ENCODE measurements at regions of chr3 and their contacts with region 1.

Region 1: GRCh38 chr3:64030741-64031140 is 7.4 kb upstream of the PSMD6 start:
- DNase-seq: peak; percentile 70 to 74
- ATAC-seq: peak; percentile 82 to 96 (median 89)
- H3K4me3 ChIP-seq: peak overlapping the region in 7 of 10 donors; percentile 9 to 47 (median 29)
- H3K27ac ChIP-seq: no peak overlapping the region
- H3K4me1 ChIP-seq: peaks cover 0 to 11% (median 3%) of the 10 kb centered on the region in 9 donors
- H3K27me3 ChIP-seq: peaks cover 0 to 18% (median 4%) of the 10 kb centered on the region in 7 donors
- CTCF ChIP-seq: peak; percentile 79 to 96 (median 87)

Region 2: DNA sequence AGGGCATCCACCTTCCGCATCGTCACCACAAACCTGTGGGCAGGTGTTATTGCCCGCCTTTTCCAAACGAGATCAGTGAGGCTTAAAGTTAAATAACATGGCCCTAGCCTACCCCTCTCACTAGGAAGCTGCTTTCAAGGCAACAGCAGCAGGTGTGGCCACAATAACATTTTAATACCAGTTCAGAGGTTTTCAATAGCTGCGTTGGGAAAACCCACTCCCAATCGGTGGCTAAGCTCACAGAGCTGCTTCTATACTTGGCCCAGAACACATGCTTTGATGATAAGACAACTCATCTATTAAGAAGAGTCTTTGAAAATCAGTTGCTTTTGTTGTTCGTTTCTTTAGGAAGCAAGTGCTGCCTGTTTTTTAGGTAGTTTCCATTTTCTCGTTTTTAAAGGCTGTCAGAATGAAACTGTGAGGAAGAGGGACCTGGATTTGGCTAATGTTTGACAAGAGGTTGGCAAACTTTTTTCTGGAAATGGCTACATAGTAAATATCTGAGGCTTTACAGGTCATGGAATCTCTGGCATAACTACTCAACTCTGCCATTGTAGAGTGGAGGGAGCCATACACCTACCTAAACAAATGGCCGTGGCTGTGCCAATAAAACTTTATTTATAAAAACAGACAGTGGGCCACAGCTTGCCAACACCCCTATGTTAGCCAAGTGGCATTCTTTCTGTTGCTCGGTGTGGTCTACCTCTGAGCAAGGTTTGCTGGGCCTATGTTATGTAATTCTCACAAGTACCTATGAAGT is 1837.0 kb before region 1 on chr3:
- intact Hi-C with region 1: no loop called
- DNase-seq: no peak
- ATAC-seq: no peak
- H3K4me3 ChIP-seq: no peak overlapping the region
- H3K27ac ChIP-seq: no peak overlapping the region
- H3K4me1 ChIP-seq: peaks cover 0 to 6% (median 5%) of the 10 kb centered on the region in 9 donors
- H3K27me3 ChIP-seq: no peaks in the 10 kb centered on the region
- CTCF ChIP-seq: no peak

Region 3: GRCh38 chr3:64008017-64008971 is 22.4 kb before region 1 on chr3:
- intact Hi-C with region 1: loop called in 1 of 10 experiments (anchors 1 kb)
- DNase-seq: no peak
- ATAC-seq: peak in 1 of 8 donors; percentile 27
- H3K4me3 ChIP-seq: no peak overlapping the region
- H3K27ac ChIP-seq: no peak overlapping the region
- H3K4me1 ChIP-seq: peaks cover 0 to 28% (median 5%) of the 10 kb centered on the region in 9 donors
- H3K27me3 ChIP-seq: no peaks in the 10 kb centered on the region
- CTCF ChIP-seq: no peak

Region 4: DNA sequence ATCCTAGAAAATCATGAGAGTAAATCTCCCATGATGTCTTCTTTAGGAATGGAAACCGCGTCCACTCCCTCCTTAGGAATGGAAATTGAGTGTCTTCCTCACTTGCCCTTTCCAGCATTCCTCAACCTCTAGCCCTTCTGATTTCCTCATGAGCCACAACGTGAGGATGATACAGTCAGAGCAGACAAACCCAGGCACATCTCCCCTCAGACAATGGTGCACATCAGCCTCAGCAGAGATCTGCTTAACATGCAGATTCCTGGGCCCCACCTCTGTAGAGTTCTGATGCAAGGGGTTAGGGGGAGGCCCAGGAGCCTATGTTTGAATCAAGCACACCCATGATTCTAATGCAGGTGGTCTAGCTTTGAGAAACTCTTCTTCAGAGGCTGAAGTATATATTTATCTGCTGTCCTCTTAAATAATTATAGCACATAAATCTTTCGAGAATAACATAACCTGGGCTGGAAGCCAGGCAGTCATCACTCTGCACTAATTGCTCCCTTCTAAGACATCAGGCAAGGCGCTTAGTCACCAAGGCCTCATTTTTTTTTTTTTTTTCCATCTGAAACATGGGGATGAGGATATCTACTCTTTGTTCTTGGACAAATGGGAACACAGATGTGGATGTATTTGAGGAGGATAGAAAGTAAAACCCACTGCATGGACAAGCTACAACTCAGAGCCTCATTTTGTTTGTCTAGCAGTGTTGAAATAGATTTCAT is 112.8 kb after region 1 on chr3:
- intact Hi-C with region 1: loop called in 1 of 10 experiments (anchors 10 kb)
- DNase-seq: no peak
- ATAC-seq: peak in 5 of 8 donors; percentile 28 to 62 (median 38)
- H3K4me3 ChIP-seq: no peak overlapping the region
- H3K27ac ChIP-seq: peak overlapping the region in 2 of 10 donors; percentile 8 to 33
- H3K4me1 ChIP-seq: peaks cover 0 to 27% (median 15%) of the 10 kb centered on the region in 9 donors
- H3K27me3 ChIP-seq: no peaks in the 10 kb centered on the region
- CTCF ChIP-seq: no peak

Region 5: DNA sequence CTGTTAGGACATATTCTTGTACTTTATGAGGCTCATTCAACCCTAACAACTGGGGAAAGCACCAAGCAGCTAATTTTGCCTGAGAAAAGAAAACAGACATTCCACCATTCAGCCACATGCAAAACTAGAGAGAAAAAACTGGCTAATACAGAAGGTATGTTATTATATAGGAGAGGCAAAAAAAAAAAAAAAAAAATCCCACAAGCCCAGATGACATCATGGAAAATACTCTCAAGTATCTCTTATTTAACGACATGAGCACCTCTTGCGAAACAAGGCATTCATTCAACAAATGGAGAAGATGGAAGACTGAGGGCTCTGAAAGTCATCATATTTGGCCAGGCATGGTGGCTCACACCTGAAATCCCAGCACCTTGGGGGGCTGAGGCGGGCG is 133.0 kb after region 1 on chr3:
- intact Hi-C with region 1: loop called in 5 of 10 experiments (anchors 5 to 10 kb)
- DNase-seq: no peak
- ATAC-seq: no peak
- H3K4me3 ChIP-seq: no peak overlapping the region
- H3K27ac ChIP-seq: peak overlapping the region in 2 of 10 donors; percentile 29 to 69
- H3K4me1 ChIP-seq: peaks cover 0 to 63% (median 34%) of the 10 kb centered on the region in 9 donors
- H3K27me3 ChIP-seq: no peaks in the 10 kb centered on the region
- CTCF ChIP-seq: no peak

Region 6: GRCh38 chr3:64224826-64225610 is 194.3 kb after region 1 on chr3 and contains the start of gene PRICKLE2:
- intact Hi-C with region 1: loop called in 5 of 10 experiments (anchors 2 to 10 kb)
- DNase-seq: peak; percentile 75 to 89
- ATAC-seq: peak; percentile 75 to 88 (median 84)
- H3K4me3 ChIP-seq: peak within 1 kb of the TSS in 9 of 10 donors; percentile 6 to 54 (median 47)
- H3K27ac ChIP-seq: peak within 1 kb of the TSS; percentile 27 to 89 (median 78)
- H3K4me1 ChIP-seq: peaks cover 11 to 80% (median 59%) of the 10 kb centered on the region in 9 donors
- H3K27me3 ChIP-seq: no peaks in the 10 kb centered on the region
- CTCF ChIP-seq: peak in 5 of 9 donors; percentile 16 to 54 (median 39)
- total RNA-seq, gene PRICKLE2: 6.4 to 12.2 (median 8.4) TPM

Region 7: GRCh38 chr3:64484289-64484992 is 453.7 kb after region 1 on chr3:
- intact Hi-C with region 1: loop called (anchors 1 to 5 kb)
- DNase-seq: peak; percentile 73 to 80
- ATAC-seq: peak; percentile 89 to 95 (median 92)
- H3K4me3 ChIP-seq: no peak overlapping the region
- H3K27ac ChIP-seq: no peak overlapping the region
- H3K4me1 ChIP-seq: peaks cover 0 to 18% (median 0%) of the 10 kb centered on the region in 9 donors
- H3K27me3 ChIP-seq: peaks cover 0 to 16% (median 4%) of the 10 kb centered on the region in 7 donors
- CTCF ChIP-seq: peak; percentile 73 to 96 (median 88)

Measured in heart right ventricle (tissue), 16 donors.